Transverse colon (tissue), 4 donors: ENCODE measurements at regions of chr20 and their contacts with region 1.

Region 1: GRCh38 chr20:48597405-48598302 is 230.1 kb downstream of the PREX1 start:
- DNase-seq: peak; percentile 12
- H3K4me3 ChIP-seq: no peak overlapping the region
- H3K27ac ChIP-seq: no peak overlapping the region
- H3K4me1 ChIP-seq: peaks cover 9 to 18% (median 15%) of the 10 kb centered on the region in 4 donors
- H3K27me3 ChIP-seq: no peaks in the 10 kb centered on the region
- CTCF ChIP-seq: no peak
- EP300 ChIP-seq: no peak
- POLR2A ChIP-seq: no peak

Region 2: DNA sequence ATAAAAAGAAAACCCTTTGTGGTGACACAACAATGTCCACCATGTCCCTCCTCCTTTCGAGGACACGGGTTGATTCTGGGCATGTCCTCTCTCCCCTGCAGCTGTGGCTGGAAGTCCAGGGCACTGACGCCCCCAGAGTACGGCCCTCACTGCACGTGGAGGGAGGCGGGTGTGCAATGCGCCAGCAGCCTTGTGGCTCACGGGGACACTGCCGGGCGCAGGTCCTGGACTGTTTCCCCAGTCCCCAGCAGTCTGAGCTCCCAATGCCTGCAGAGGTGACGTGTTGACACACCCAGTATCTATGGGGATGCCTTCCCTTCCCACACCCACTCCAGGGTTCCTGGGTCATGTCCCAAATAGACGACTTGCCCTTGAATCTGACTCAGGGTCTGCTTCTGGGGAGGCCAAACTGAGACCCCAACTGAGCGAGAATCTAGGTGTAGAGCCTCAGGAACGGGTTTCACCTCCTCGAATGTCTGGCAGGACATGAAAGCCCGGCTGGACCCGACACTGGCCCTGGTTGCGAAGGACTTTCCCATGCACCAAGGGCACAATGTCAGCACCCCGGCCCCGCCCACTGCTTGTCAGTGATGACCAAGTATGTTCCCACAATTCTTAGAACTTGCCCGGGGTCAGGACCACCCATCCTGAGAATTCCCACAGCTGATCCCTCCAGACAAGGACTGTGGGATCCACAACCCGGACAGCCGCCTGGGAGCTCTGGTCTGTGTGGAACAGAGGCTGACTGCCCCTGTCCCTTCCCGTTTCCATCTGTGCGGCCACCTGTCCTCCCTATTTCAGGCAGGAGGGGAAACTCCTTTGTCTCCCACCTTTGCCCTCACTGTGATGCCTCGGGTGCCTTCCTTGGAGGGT is 387.3 kb before region 1 on chr20:
- in situ Hi-C with region 1: loop called in 1 of 4 experiments (anchors 5 kb)
- intact Hi-C with region 1: no loop called
- DNase-seq: no peak
- H3K4me3 ChIP-seq: no peak overlapping the region
- H3K27ac ChIP-seq: no peak overlapping the region
- H3K4me1 ChIP-seq: no peaks in the 10 kb centered on the region
- H3K27me3 ChIP-seq: no peaks in the 10 kb centered on the region
- CTCF ChIP-seq: no peak
- EP300 ChIP-seq: no peak
- POLR2A ChIP-seq: no peak